Activated B cell treated with CpG ODN at 0.5 μM for 24 hours (primary cell): ENCODE measurements at regions of chr1 and their contacts with region 1.

Region 1: DNA sequence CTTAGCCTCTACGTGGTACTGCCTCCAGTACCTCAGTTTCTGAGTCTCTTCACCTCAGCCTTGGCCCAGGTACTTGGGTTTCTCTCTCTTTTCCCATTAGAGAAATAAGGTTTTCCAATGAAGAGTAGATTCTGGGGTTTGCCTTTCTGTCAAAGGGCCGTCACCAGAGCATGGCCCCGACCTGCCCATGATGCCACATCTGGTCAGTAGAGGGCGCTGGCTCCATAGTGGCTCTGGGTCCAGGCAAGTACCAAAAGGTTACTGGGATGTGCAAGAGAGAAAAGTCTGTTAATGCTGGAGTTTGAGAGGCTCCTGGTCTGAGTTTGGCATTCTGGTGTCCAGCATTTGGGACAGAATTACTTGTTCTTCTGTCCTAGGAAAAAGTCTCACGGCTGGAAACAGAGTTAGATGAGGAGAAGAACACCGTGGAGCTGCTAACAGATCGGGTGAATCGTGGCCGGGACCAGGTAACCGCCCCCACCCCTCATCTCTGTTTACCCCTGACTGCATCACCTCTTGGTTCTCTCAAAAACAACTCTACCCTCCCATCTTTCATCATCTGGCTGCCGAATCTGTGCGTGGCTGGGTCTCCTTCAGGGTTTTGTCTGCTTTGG is 5.3 kb upstream of the TUFT1 start:
- DNase-seq: peak; percentile 49
- ATAC-seq: peak; percentile 71
- H3K4me3 Mint-ChIP-seq: no peak overlapping the region
- H3K27ac Mint-ChIP-seq: no peak overlapping the region
- H3K4me1 Mint-ChIP-seq: peaks cover 6% of the 10 kb centered on the region
- H3K27me3 Mint-ChIP-seq: no peaks in the 10 kb centered on the region
- CTCF ChIP-seq: no peak

Region 2: DNA sequence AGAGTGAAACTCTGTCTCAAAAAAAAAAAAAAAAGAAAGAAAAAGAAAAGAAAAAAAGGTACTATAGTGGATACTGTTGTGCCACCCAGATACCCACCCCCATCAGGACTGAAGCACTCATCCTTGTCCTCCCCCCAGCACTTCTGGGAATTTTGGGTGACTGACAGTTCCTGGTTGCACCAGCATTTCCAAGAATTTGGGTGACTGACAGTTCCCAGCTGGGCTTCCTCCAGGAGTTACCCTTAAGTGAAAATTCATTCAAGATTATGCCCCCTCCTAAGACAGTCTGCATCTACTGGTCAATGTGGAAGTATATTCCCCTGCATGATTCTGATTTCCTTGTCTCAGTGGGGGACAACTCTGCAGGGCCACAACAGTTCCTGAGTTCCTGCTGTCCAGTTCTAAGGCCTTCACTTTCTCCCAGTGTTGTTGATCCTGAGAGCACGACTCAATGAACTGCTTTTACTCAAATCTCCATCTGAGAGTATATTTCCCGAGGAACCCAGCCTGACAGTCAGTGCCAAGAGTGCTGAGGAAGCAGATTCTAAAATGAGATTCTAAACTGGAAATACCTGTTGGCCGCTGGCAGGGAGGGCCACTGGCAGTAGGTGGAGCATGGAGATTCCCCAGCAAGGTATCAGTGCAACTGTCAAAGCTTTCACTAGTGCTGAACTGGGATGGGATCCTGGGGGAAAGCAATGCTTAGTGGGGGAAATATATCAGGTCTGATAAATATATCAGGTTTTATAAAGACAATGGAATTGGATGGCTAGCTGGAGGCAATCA is 205.0 kb after region 1 on chr1:
- CTCF ChIA-PET with region 1: interaction called, 3 read pairs
- POLR2A ChIA-PET with region 1: no interaction called
- intact Hi-C with region 1: loop called (anchors 1 kb)
- DNase-seq: no peak
- ATAC-seq: no peak
- H3K4me3 Mint-ChIP-seq: no peak overlapping the region
- H3K27ac Mint-ChIP-seq: no peak overlapping the region
- H3K4me1 Mint-ChIP-seq: no peaks in the 10 kb centered on the region
- H3K27me3 Mint-ChIP-seq: peaks cover 4% of the 10 kb centered on the region
- CTCF ChIP-seq: no peak